ENCODE measurements at regions of chr10 and their contacts with region 1.

Region 1: GRCh38 chr10:94315024-94315451 is 47.7 kb downstream of the NOC3L start:
- DNase-seq: no peak
- H3K4me3 ChIP-seq: no peak overlapping the region
- H3K27ac ChIP-seq: no peak overlapping the region
- H3K4me1 ChIP-seq: peaks cover 3% of the 10 kb centered on the region
- H3K27me3 ChIP-seq: no peaks in the 10 kb centered on the region
- CTCF ChIP-seq: no peak
- EP300 ChIP-seq: no peak
- POLR2A ChIP-seq: no peak

Region 2: GRCh38 chr10:94076321-94076841 is 238.7 kb before region 1 on chr10:
- intact Hi-C with region 1: loop called (anchors 5 to 10 kb)
- DNase-seq: peak in 3 of 5 donors; percentile 13 to 37 (median 24)
- H3K4me3 ChIP-seq: no peak overlapping the region
- H3K27ac ChIP-seq: no peak overlapping the region
- H3K4me1 ChIP-seq: no peaks in the 10 kb centered on the region
- H3K27me3 ChIP-seq: no peaks in the 10 kb centered on the region
- CTCF ChIP-seq: peak in 2 of 3 donors; percentile 25 to 72
- EP300 ChIP-seq: no peak
- POLR2A ChIP-seq: no peak

Region 3: GRCh38 chr10:94083662-94084265 is 231.3 kb before region 1 on chr10:
- intact Hi-C with region 1: loop called (anchors 5 to 10 kb)
- DNase-seq: no peak
- H3K4me3 ChIP-seq: no peak overlapping the region
- H3K27ac ChIP-seq: no peak overlapping the region
- H3K4me1 ChIP-seq: no peaks in the 10 kb centered on the region
- H3K27me3 ChIP-seq: no peaks in the 10 kb centered on the region
- CTCF ChIP-seq: no peak
- EP300 ChIP-seq: no peak
- POLR2A ChIP-seq: no peak

Region 4: DNA sequence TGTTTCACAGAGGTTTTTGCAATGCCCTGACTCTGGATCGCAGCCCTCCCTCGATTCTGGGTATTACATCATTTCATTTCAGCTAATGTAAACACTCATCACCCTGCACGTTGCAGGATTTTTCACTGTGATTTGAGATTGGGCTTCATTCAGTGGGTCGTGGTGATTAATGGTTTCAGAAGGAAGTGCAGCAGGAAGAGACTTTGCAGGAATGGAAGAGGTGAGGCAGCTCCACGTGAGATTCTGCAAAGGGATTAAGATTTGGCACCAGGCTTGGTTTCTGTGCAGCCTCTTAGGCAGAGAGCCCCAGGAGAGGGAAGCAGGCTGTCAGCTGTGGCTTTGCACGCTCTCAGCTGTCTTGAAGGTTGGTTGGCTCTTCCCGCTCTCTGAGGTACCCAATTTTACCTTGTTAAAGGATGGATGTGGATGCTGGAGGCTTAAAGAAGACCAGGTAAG is 226.1 kb before region 1 on chr10:
- intact Hi-C with region 1: loop called in 2 of 4 experiments (anchors 5 to 10 kb)
- DNase-seq: peak in 2 of 5 donors; percentile 20 to 27
- H3K4me3 ChIP-seq: no peak overlapping the region
- H3K27ac ChIP-seq: no peak overlapping the region
- H3K4me1 ChIP-seq: peaks cover 8% of the 10 kb centered on the region
- H3K27me3 ChIP-seq: no peaks in the 10 kb centered on the region
- CTCF ChIP-seq: no peak
- EP300 ChIP-seq: no peak
- POLR2A ChIP-seq: no peak

Measured in ovary (tissue), 10 donors.